Calu3 (cell line): ENCODE measurements at regions of chr15 and their contacts with region 1.

Region 1: GRCh38 chr15:64355944-64356709 is at the start of gene CSNK1G1:
- DNase-seq: peak; percentile 96
- H3K4me3 Mint-ChIP-seq: peak within 1 kb of the TSS; percentile 95
- H3K27ac Mint-ChIP-seq: peak within 1 kb of the TSS; percentile 80
- H3K4me1 Mint-ChIP-seq: peaks cover 16% of the 10 kb centered on the region
- H3K27me3 Mint-ChIP-seq: no peaks in the 10 kb centered on the region
- CTCF ChIP-seq: peak; percentile 49
- total RNA-seq, gene CSNK1G1: 23.9 and 26.7 TPM in 2 replicates

Region 2: GRCh38 chr15:64209680-64210334 is 146.3 kb before region 1 on chr15:
- CTCF ChIA-PET with region 1: interaction called, 5 read pairs
- intact Hi-C with region 1: loop called (anchors 1 kb)
- DNase-seq: peak; percentile 13
- H3K4me3 Mint-ChIP-seq: no peak overlapping the region
- H3K27ac Mint-ChIP-seq: no peak overlapping the region
- H3K4me1 Mint-ChIP-seq: peaks cover 7% of the 10 kb centered on the region
- H3K27me3 Mint-ChIP-seq: no peaks in the 10 kb centered on the region
- CTCF ChIP-seq: no peak